PC-3 (cell line): ENCODE measurements at regions of chr10 and their contacts with region 1.

Region 1: DNA sequence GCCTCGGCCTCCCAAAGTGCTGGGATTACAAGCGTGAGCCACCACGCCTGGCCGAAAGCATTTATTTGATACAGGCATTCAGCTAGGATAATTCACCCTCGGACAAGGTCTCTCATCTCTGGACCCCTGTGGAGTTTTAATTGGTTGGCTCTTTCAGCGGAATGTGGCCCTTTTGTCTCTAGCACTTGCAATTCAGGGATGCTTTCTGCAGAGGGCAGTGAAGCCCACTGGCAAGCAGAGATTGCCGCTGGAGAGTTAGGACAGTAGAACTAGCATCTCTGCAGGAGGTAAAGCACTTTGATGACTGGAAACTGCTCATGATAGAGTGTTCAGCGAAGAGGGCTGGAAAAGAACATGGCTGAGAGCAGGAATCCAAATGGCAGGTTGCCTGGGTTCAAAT is 62.0 kb downstream of the SUFU start:
- DNase-seq: no peak
- ATAC-seq: no peak
- H3K4me3 ChIP-seq: no peak overlapping the region
- H3K27ac ChIP-seq: no peak overlapping the region
- H3K4me1 ChIP-seq: no peaks in the 10 kb centered on the region
- H3K27me3 ChIP-seq: no peaks in the 10 kb centered on the region
- CTCF ChIP-seq: peak; percentile 27; the same call in 1 of the 2 replicates

Region 2: DNA sequence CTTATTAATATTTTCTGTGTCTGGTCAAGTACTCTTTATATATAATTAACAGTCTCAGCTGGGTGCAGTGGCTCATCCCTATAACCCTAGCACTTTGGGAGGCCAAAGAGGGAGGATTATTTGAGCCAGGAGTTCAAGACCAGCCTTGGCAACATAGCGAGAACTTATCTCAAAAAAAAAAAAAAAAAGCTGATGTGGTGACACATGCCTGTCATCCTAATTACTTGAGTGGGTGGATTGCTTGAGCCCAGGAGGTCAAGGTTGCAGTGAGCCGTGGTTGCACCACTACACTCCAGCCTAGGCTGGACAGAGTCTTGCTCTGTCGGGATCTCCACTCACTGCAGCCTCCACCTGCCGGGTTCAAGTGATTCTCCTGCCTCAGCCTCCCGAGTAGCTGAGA is 346.4 kb before region 1 on chr10:
- CTCF ChIA-PET with region 1: no interaction called
- POLR2A ChIA-PET with region 1: interaction called, 10 read pairs
- intact Hi-C with region 1: no loop called
- DNase-seq: no peak
- ATAC-seq: no peak
- H3K4me3 ChIP-seq: no peak overlapping the region
- H3K27ac ChIP-seq: no peak overlapping the region
- H3K4me1 ChIP-seq: no peaks in the 10 kb centered on the region
- H3K27me3 ChIP-seq: no peaks in the 10 kb centered on the region
- CTCF ChIP-seq: no peak